Common myeloid progenitor, CD34-positive (primary cell): ENCODE measurements at regions of chr3 and their contacts with region 1.

Region 1: DNA sequence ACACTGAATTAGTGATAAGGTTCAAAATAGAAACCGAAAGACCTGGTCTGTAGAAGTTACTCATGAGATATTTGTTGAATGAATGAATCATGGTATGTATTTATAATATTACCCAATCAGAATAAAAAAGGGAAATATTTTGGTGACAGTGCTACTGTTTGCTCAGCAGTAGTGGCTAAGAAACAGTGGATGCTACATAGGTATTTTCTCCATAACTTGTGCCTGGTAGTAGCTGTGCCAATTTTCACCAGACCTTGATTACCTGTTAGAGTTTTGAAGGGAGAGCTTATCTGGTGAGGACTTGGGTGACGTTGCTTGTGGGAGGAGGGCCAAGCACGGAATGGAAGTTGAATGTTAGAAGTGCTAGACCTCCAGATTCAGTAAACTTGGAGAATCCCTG is 14.3 kb downstream of the LIMD1 start:
- DNase-seq: peak in 1 of 3 donors; percentile 24
- H3K4me3 ChIP-seq: no peak overlapping the region
- H3K27ac ChIP-seq: no peak overlapping the region
- H3K4me1 ChIP-seq: peaks cover 0 to 49% (median 30%) of the 10 kb centered on the region in 4 experiments
- H3K27me3 ChIP-seq: no peaks in the 10 kb centered on the region

Region 2: DNA sequence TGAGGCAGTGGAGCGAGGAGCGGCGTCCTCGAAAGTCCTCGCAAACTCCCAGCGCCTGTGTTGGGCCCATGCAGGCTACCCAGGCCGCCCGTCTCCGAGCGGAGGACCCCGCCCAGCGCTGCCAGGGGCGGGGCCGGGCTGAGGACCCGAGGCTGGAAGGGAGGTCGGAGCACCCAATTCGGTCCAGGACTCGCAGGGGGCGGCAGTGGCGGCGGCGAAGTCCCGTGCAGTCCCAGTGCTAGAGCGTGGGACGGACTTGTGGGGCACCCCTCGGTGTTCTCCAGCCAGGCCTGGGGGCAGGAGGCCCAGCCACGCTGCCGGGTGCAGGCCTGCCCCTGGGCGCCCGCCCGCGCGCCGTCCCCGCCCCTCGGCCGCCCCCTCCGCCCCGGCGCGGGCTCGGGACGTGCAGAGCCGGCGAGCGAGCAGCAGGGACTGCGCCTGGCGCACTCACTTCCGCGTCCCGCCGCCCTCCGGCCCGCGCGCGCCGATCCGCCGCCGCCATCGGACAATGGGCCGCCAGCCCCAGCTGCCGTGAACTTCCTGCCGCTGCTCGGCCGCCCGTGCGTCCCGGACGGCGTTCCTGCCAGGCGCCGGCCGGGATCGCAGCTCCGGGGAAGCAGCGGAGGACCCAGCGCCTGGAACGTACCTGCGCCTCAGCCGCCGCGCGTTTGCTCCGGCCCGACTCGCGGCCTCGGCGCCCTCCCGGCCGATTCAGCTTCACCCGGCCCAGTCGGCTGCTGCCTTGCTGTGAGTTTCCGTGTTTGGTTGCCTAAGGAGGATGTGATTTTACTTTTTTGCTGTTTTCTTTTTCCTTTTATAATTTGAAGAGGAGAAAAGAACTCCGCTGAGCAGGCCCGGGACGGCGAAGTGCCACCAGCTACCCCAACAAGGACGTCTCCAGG is 14.9 kb before region 1 on chr3:
- CTCF ChIA-PET with region 1: interaction called, 13 read pairs
- POLR2A ChIA-PET with region 1: interaction called, 3 read pairs
- DNase-seq: peak; percentile 59 to 84 (median 75)
- H3K4me3 ChIP-seq: peak overlapping the region; percentile 68 to 91 (median 81)
- H3K27ac ChIP-seq: peak overlapping the region in 1 of 2 experiments; percentile 83
- H3K4me1 ChIP-seq: peaks cover 4 to 70% (median 59%) of the 10 kb centered on the region in 4 experiments
- H3K27me3 ChIP-seq: no peaks in the 10 kb centered on the region

Region 3: DNA sequence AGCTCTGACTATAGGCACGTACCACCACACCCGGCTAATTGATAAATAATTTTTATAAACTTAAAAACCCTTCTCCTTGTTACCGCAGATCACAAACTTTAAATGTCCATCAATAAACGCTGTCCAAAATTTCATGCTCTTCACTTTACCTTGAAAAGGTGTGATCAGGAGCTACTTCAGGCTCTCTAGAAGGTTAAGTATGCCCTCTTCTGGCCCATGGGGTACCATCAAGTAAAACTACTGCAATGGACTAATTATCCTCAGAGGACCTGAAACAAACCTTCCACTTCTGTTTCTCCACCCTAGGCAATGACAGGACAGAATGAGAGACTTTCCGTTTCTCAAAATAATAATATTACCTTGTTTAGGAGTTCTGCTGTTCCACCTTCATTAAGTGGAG is 223.8 kb after region 1 on chr3:
- CTCF ChIA-PET with region 1: no interaction called
- POLR2A ChIA-PET with region 1: no interaction called
- DNase-seq: peak in 2 of 3 donors; percentile 45 to 48
- H3K4me3 ChIP-seq: no peak overlapping the region
- H3K27ac ChIP-seq: no peak overlapping the region
- H3K4me1 ChIP-seq: no peaks in the 10 kb centered on the region
- H3K27me3 ChIP-seq: no peaks in the 10 kb centered on the region